Naive thymus-derived CD4-positive, alpha-beta T cell (primary cell): ENCODE measurements at regions of chrX and their contacts with region 1.

Region 1: DNA sequence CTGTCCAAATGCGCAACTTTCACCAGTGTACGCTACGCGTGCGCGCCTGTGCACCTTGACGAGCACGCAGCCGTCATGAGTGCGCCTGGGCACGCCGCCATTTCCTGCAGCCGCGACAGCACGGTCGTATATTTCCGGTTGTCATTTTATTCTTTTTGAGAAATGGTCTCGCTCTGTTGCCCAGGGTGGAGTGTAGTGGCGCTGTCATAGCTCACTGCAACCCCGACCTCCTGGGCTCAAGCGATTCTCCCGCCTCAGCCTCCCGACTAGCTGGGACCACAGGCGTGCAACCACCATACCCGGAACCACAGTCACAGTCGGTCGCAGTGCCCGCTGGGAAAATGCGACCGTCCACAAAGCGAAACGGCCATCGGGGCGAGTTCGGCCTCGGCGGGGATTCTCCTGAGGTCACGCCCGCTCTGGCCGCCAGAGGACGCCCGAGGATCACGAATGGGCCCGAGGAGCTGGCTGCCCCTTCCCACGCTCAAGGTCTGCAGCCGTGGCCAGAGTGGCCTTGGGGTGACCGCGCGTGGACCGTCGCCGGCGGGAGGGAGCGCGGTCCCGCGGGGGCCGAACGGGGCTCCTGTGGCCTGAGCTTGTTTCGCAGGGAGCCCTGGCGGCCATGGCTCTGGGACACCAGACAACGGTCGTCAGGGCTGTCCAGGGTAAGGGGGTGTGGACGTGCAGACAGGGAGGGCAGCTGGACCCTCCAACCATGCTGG is 23.7 kb upstream of the PNMA3 start:
- DNase-seq: peak; percentile 32 to 75 (median 53)
- ATAC-seq: peak; percentile 87
- H3K4me3 ChIP-seq: peak overlapping the region; percentile 69
- H3K4me3 Mint-ChIP-seq: peak overlapping the region; percentile 78 to 90 (median 86)
- H3K27ac ChIP-seq: peak overlapping the region; percentile 53
- H3K27ac Mint-ChIP-seq: peak overlapping the region; percentile 68 to 93 (median 87)
- H3K4me1 ChIP-seq: peaks cover 7 to 9% of the 10 kb centered on the region in 2 donors
- H3K4me1 Mint-ChIP-seq: peaks cover 0 to 11% (median 4%) of the 10 kb centered on the region in 7 donors
- H3K27me3 ChIP-seq: no peaks in the 10 kb centered on the region
- H3K27me3 Mint-ChIP-seq: no peaks in the 10 kb centered on the region

Region 2: DNA sequence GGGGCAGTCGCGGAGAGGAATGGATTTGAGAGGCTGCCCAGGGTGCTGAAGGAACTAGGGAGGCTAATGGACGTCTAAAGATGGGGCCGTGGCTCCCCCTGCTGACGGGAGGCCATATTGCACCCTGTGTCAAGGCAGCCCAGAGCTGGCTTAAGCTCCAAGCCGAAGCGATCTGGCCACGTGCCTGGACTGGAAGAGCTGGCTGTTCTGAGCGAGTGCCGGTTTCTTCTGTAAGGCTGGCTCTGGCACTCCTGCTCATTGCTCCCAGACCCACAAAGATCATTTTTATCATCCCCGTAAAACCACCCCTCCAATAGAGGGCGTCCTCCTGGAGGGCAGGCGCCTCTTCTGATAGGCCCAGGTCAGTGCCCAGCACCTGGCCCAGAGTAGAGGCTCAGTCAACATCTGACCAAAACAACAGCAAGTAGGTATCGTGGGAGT is 635.4 kb after region 1 on chrX:
- CTCF ChIA-PET with region 1: interaction called, 5 read pairs
- POLR2A ChIA-PET with region 1: no interaction called
- intact Hi-C with region 1: loop called in 1 of 2 experiments (anchors 1 kb)
- DNase-seq: peak; percentile 51 to 78 (median 65)
- ATAC-seq: peak; percentile 93
- H3K4me3 ChIP-seq: no peak overlapping the region
- H3K4me3 Mint-ChIP-seq: peak overlapping the region; percentile 53 to 82 (median 74)
- H3K27ac ChIP-seq: no peak overlapping the region
- H3K27ac Mint-ChIP-seq: peak overlapping the region in 4 of 9 donors; percentile 2 to 51 (median 37)
- H3K4me1 ChIP-seq: no peaks in the 10 kb centered on the region
- H3K4me1 Mint-ChIP-seq: peaks cover 5 to 10% (median 7%) of the 10 kb centered on the region in 7 donors
- H3K27me3 ChIP-seq: no peaks in the 10 kb centered on the region
- H3K27me3 Mint-ChIP-seq: peaks cover 0 to 28% (median 7%) of the 10 kb centered on the region in 5 donors